ENCODE measurements at regions of chr19 and their contacts with region 1.

Region 1: GRCh38 chr19:2236314-2237050 is at the starts of genes PLEKHJ1 and SF3A2:
- DNase-seq: peak; percentile 95
- total RNA-seq, gene PLEKHJ1: 172 and 182 TPM in 2 replicates
- total RNA-seq, gene SF3A2: 21.9 and 33.0 TPM in 2 replicates

Region 2: GRCh38 chr19:2113439-2114211 is 122.9 kb before region 1 on chr19:
- in situ Hi-C with region 1: no loop called
- DNase-seq: peak; percentile 84

Region 3: DNA sequence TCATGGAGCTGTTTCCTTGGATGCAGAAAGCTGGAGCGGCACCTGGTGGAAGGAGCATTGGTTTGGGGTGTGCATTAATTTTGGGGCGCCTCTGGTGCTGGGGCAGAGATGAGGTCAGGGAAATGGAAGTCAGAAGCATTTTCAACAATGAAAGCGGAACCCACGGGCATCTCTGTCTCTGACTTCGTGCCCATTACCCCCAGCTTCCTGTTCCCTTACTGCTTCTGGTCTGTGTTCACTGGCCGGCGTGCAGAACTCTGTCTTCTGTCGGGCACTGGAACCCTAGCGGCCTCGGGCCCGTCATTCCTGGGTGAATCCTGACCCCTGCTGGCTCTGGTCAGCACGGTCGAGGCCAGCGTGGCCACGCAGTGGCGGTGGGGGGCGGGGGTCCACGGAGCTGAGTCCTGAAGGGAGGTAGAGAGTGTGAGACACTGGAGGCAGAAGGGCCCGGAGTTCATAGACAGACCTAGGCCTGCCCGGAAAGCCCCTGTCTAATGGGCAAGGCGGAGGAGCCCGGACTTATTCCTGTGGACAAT is 79.4 kb after region 1 on chr19:
- in situ Hi-C with region 1: loop called (anchors 5 kb)
- DNase-seq: peak; percentile 44

Region 4: GRCh38 chr19:2355168-2356035 is 118.9 kb after region 1 on chr19:
- in situ Hi-C with region 1: no loop called
- DNase-seq: peak; percentile 64

Region 5: GRCh38 chr19:2381148-2381820 is 144.8 kb after region 1 on chr19:
- in situ Hi-C with region 1: no loop called
- DNase-seq: peak; percentile 32

Region 6: GRCh38 chr19:2394442-2395292 is 158.2 kb after region 1 on chr19:
- in situ Hi-C with region 1: no loop called
- DNase-seq: no peak